Activated T-helper 2 cell treated with anti-CD3 and anti-CD28 coated beads, Interferon-gamma antibody, Interleukin-2, Interleukin-4, amounts not matched to agents 10 μg/mL and 5 μg/mL and 100 μg/mL, durations not matched to agents 14 hours and 24 hours and 36 hours (primary cell): ENCODE measurements at regions of chr11 and their contacts with region 1.

Region 1: DNA sequence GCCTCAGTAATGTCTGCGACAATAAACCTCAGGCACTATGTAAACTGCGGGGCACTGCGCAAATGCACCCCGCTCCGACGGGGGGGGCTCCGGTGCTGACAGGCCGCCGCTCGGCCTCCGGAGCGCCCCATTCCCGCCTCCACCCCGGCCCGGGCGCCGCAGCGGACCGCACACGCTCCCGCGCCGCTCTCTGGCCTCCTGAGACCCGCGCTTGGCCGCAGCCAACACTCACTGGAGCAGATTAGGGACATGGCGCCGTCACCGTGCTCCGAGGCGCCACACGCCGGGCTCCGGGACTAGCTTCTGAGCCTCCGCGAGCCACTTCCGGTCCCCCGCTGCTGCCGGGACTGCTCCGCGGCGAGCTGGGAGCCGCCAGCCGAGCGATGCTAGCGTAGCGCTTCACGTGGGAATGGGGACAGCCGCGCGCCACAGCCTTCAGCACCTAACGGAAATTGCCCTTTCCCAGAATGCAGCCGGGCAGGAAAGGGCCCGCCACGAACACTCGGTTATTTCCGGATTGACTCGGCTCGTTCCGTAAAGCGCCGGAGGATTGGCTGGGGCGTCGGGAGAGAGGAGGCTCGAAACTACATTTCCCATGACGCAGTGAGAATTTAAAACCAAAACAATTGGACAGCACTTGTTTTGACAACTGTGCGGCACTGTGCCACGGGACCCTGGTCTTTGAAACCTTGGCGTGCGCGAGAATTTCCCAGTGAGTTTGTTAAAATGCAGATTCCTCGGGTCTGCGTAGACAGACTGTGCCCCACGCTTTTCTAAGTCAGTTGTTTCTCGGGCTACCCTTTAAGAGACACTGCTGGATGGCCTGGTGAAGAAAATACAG is at the start of gene PRPF19:
- DNase-seq: peak; percentile 99
- H3K4me3 Mint-ChIP-seq: peak within 1 kb of the TSS; percentile 82
- H3K27ac Mint-ChIP-seq: peak within 1 kb of the TSS; percentile 89
- H3K4me1 Mint-ChIP-seq: peaks cover 39% of the 10 kb centered on the region
- H3K27me3 Mint-ChIP-seq: peaks cover 12% of the 10 kb centered on the region
- total RNA-seq, gene PRPF19: 170 and 182 TPM in 2 replicates

Region 2: GRCh38 chr11:60841797-60842667 is 64.3 kb before region 1 on chr11 and contains the start of gene CCDC86:
- intact Hi-C with region 1: loop called (anchors 2 kb)
- DNase-seq: peak; percentile 97
- H3K4me3 Mint-ChIP-seq: peak within 1 kb of the TSS; percentile 90
- H3K27ac Mint-ChIP-seq: peak within 1 kb of the TSS; percentile 88
- H3K4me1 Mint-ChIP-seq: peaks cover 44% of the 10 kb centered on the region
- H3K27me3 Mint-ChIP-seq: no peaks in the 10 kb centered on the region
- total RNA-seq, gene CCDC86: 56.7 and 57.2 TPM in 2 replicates